ENCODE measurements at regions of chr4 and their contacts with region 1.

Region 1: GRCh38 chr4:59135248-59135985 is 2025.2 kb upstream of the IGFBP7 start:
- DNase-seq: no peak
- ATAC-seq: no peak
- H3K4me3 ChIP-seq: no peak overlapping the region
- H3K4me3 Mint-ChIP-seq: no peak overlapping the region
- H3K27ac ChIP-seq: no peak overlapping the region
- H3K27ac Mint-ChIP-seq: no peak overlapping the region
- H3K4me1 ChIP-seq: no peaks in the 10 kb centered on the region
- H3K4me1 Mint-ChIP-seq: no peaks in the 10 kb centered on the region
- H3K27me3 ChIP-seq: no peaks in the 10 kb centered on the region
- H3K27me3 Mint-ChIP-seq: no peaks in the 10 kb centered on the region
- CTCF ChIP-seq: no peak

Region 2: GRCh38 chr4:59122626-59123025 is 12.8 kb before region 1 on chr4:
- CTCF ChIA-PET with region 1: no interaction called
- POLR2A ChIA-PET with region 1: no interaction called
- intact Hi-C with region 1: no loop called
- DNase-seq: no peak
- ATAC-seq: no peak
- H3K4me3 ChIP-seq: no peak overlapping the region
- H3K4me3 Mint-ChIP-seq: no peak overlapping the region
- H3K27ac ChIP-seq: no peak overlapping the region
- H3K27ac Mint-ChIP-seq: no peak overlapping the region
- H3K4me1 ChIP-seq: no peaks in the 10 kb centered on the region
- H3K4me1 Mint-ChIP-seq: no peaks in the 10 kb centered on the region
- H3K27me3 ChIP-seq: no peaks in the 10 kb centered on the region
- H3K27me3 Mint-ChIP-seq: no peaks in the 10 kb centered on the region
- CTCF ChIP-seq: no peak

Region 3: DNA sequence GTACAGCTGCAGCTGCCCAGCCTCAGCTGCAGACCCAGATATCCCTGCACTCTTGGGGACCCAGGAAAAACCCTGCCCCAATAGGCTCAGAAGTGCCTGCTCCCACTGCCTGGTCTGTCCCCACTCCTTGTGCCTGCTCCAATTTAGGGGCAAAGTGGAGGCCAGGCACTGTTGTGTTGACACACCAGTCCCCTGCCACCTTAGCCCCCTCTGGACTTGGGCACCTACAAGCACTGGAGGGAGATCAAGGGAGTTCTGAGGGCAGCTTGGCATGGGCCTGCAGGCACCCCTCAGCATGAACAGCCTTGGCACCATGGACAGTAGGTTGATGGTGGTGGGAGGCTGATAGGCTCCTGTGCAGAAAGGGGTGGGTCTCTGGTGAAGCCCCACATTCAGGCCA is 44.0 kb after region 1 on chr4:
- CTCF ChIA-PET with region 1: no interaction called
- POLR2A ChIA-PET with region 1: no interaction called
- intact Hi-C with region 1: loop called in 1 of 2 experiments (anchors 1 kb)
- DNase-seq: no peak
- ATAC-seq: no peak
- H3K4me3 ChIP-seq: no peak overlapping the region
- H3K4me3 Mint-ChIP-seq: no peak overlapping the region
- H3K27ac ChIP-seq: no peak overlapping the region
- H3K27ac Mint-ChIP-seq: no peak overlapping the region
- H3K4me1 ChIP-seq: no peaks in the 10 kb centered on the region
- H3K4me1 Mint-ChIP-seq: no peaks in the 10 kb centered on the region
- H3K27me3 ChIP-seq: no peaks in the 10 kb centered on the region
- H3K27me3 Mint-ChIP-seq: no peaks in the 10 kb centered on the region
- CTCF ChIP-seq: no peak

Measured in CD8-positive, alpha-beta T cell (primary cell).